Activated CD8-positive, alpha-beta T cell treated with anti-CD3 and anti-CD28 coated beads, Interleukin-2, amount 10 ng/mL, durations not matched to agents 7 days and 5 days (primary cell): ENCODE measurements at regions of chr16 and their contacts with region 1.

Region 1: GRCh38 chr16:48632137-48632774 is 22.3 kb upstream of the N4BP1 start:
- DNase-seq: no peak
- ATAC-seq: no peak
- H3K4me3 Mint-ChIP-seq: no peak overlapping the region
- H3K27ac Mint-ChIP-seq: no peak overlapping the region
- H3K4me1 Mint-ChIP-seq: peaks cover 8% of the 10 kb centered on the region
- H3K27me3 Mint-ChIP-seq: no peaks in the 10 kb centered on the region

Region 2: GRCh38 chr16:48231727-48232492 is 400.3 kb before region 1 on chr16:
- CTCF ChIA-PET with region 1: interaction called, 43 read pairs
- POLR2A ChIA-PET with region 1: no interaction called
- DNase-seq: peak; percentile 67
- ATAC-seq: peak; percentile 88
- H3K4me3 Mint-ChIP-seq: no peak overlapping the region
- H3K27ac Mint-ChIP-seq: peak overlapping the region; percentile 70
- H3K4me1 Mint-ChIP-seq: peaks cover 20% of the 10 kb centered on the region
- H3K27me3 Mint-ChIP-seq: no peaks in the 10 kb centered on the region

Region 3: GRCh38 chr16:48347191-48347865 is 284.9 kb before region 1 on chr16:
- CTCF ChIA-PET with region 1: interaction called, 41 read pairs
- POLR2A ChIA-PET with region 1: no interaction called
- DNase-seq: no peak
- ATAC-seq: no peak
- H3K4me3 Mint-ChIP-seq: no peak overlapping the region
- H3K27ac Mint-ChIP-seq: no peak overlapping the region
- H3K4me1 Mint-ChIP-seq: no peaks in the 10 kb centered on the region
- H3K27me3 Mint-ChIP-seq: no peaks in the 10 kb centered on the region

Region 4: DNA sequence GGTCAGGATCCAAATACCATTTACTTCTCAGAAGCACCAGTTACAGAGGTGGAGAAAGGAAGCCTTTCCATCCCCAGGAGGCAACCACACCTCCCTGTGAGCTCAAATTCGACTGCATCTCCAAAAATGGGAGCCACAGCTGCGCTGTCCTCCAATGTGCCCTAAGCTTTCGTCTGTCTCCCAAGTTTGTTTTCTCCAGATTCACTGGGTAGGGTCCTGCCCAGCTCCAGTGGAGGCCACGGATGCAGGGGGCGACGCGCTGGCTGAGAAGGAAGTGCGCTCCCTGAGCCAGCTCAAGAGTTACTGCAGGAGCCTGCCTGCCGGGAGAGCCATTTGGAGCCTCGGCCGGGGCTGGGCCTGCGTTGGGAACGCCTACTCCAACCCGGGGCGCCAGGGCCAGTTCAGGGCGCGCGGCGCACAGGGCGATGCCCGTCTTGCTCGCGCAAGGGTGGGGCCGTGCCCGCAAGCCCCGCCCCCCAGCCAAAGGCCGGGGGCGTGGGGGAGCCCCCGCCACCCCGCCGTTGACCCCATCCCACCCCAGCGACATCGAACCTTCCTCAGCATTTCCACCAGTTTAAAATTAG is 266.6 kb before region 1 on chr16:
- CTCF ChIA-PET with region 1: interaction called, 12 read pairs
- POLR2A ChIA-PET with region 1: interaction called, 3 read pairs
- DNase-seq: peak; percentile 86
- ATAC-seq: peak; percentile 98
- H3K4me3 Mint-ChIP-seq: peak overlapping the region; percentile 93
- H3K27ac Mint-ChIP-seq: peak overlapping the region; percentile 98
- H3K4me1 Mint-ChIP-seq: peaks cover 46% of the 10 kb centered on the region
- H3K27me3 Mint-ChIP-seq: no peaks in the 10 kb centered on the region

Region 5: GRCh38 chr16:48556913-48557351 is 75.3 kb before region 1 on chr16:
- CTCF ChIA-PET with region 1: interaction called, 10 read pairs
- POLR2A ChIA-PET with region 1: no interaction called
- DNase-seq: peak; percentile 34
- ATAC-seq: peak; percentile 77
- H3K4me3 Mint-ChIP-seq: no peak overlapping the region
- H3K27ac Mint-ChIP-seq: peak overlapping the region; percentile 32
- H3K4me1 Mint-ChIP-seq: peaks cover 75% of the 10 kb centered on the region
- H3K27me3 Mint-ChIP-seq: no peaks in the 10 kb centered on the region

Region 6: DNA sequence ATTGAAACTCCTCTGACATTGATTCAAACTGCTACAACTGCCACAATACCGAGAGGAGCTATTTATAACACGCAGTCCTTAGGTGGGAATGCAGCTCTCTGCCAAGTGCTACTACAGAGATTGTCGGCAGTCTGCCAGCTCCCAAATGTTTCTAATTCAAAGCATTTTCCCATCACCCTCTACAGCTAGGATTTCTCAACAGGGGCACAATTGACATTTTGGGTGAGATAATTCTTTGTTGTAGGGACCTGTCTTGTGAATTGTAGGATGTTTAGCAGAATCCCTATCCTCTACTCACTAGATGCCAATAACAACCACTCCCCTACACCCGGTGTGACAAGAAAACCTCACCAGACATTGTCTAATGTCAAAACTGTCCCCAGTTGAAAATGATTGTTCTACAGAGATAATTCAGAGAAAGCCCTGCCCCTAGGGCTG is 14.5 kb before region 1 on chr16:
- CTCF ChIA-PET with region 1: interaction called, 21 read pairs
- POLR2A ChIA-PET with region 1: interaction called, 5 read pairs
- DNase-seq: no peak
- ATAC-seq: no peak
- H3K4me3 Mint-ChIP-seq: no peak overlapping the region
- H3K27ac Mint-ChIP-seq: no peak overlapping the region
- H3K4me1 Mint-ChIP-seq: peaks cover 82% of the 10 kb centered on the region
- H3K27me3 Mint-ChIP-seq: no peaks in the 10 kb centered on the region

Region 7: DNA sequence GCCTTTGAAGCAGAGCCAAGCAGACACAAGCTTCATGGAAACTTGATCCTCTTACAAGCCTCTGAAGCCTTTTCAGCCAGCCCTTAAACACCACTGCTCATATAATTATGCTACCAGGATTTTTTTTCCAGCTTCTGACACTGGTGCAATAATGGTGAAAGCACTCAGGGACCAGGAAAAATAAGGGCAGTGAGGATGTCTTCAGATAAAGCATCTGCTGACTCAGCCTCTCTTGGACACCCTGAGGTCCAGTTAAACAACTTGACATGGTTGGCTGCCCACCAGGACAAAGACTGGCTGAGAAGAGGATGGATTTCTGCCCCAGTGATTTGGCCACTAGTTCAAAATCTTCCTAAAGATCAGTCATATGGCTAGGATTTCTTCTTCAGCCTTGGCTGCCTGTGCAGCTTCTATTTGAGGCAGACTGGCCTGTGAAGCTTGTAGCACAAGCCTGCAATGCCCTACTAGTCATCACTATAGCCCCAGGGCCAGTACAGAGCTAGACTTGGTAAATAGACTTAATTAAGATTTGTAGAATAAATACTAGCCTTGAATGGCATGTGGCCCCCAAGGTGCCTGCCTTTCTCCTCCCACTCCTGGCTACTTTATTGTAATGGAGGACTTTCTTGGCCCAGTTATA is 102.1 kb after region 1 on chr16:
- CTCF ChIA-PET with region 1: no interaction called
- POLR2A ChIA-PET with region 1: no interaction called
- DNase-seq: no peak
- ATAC-seq: no peak
- H3K4me3 Mint-ChIP-seq: no peak overlapping the region
- H3K27ac Mint-ChIP-seq: no peak overlapping the region
- H3K4me1 Mint-ChIP-seq: no peaks in the 10 kb centered on the region
- H3K27me3 Mint-ChIP-seq: no peaks in the 10 kb centered on the region